Sigmoid colon (tissue), 7 donors: ENCODE measurements at regions of chr20 and their contacts with region 1.

Region 1: DNA sequence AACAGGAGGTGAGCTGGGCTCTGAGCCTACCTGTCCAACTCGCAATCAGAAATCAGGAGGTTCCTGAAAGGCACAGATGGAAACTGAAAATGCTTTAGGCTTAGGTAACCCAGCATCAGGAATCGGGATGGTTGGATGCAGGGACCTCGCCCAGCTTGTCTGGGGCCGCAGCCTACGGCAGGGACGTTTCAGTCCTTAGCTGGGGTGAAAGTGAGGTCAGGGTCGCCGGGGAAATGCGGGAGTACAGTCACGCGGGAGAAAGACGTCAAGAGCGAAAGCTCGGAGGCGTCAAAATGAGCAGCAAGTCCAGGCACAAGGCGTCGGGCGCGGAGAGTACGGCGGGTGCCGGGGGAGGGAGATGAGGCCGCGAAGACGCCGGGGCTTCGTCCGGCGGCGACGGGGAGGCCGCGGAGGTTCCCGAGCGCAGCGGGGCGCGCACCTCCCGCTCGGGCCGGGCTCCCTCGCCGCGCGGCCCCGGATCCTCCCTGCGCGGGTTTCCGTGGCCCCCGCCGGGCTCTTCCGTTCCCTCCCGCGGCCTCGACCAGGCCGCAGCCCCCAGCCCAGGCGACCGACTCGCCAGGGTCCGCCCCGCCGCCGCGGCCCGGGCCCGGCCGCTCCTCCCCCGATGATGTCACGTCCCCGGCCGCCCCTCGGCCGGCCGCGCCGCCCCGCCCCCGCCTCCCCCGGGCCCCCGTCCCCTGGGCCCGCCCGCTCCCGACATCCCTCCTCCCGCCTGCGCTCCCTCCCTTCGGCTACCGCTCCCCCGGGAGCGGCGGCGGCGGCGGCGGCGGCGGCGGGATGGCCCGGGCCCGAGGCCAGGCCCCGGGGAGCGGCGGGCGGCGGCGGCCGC is at the start of gene EBF4:
- DNase-seq: peak; percentile 86
- H3K4me3 ChIP-seq: peak within 1 kb of the TSS; percentile 39 to 72 (median 70)
- H3K27ac ChIP-seq: peak within 1 kb of the TSS; percentile 81 to 96 (median 92)
- H3K4me1 ChIP-seq: peaks cover 0 to 23% (median 20%) of the 10 kb centered on the region in 4 donors
- H3K27me3 ChIP-seq: no peaks in the 10 kb centered on the region
- CTCF ChIP-seq: no peak
- EP300 ChIP-seq: peak in 1 of 4 donors; percentile 55
- POLR2A ChIP-seq: no peak
- total RNA-seq, gene EBF4: 14.8 to 37.5 (median 30.8) TPM

Region 2: DNA sequence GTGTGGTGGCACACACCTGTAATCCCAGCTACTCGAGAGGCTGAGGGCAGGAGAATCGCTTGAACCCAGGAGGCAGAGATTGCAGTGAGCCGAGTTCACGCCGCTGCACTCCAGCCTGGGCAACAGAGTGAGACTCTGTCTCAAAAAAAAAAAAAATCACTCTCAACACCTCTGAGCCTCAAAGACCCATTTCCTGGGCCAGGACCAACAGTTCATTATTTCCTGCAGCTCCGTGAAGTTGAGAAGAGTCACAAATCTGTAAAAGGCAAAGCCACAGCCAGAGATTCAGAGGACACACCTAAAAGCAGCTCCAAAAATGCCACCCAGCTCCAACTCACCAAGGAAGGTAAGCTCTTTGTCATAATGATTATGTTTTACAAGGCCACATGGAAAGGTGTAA is 55.0 kb before region 1 on chr20:
- intact Hi-C with region 1: no loop called
- DNase-seq: no peak
- H3K4me3 ChIP-seq: no peak overlapping the region
- H3K27ac ChIP-seq: no peak overlapping the region
- H3K4me1 ChIP-seq: no peaks in the 10 kb centered on the region
- H3K27me3 ChIP-seq: no peaks in the 10 kb centered on the region
- CTCF ChIP-seq: no peak
- EP300 ChIP-seq: no peak
- POLR2A ChIP-seq: no peak

Region 3: GRCh38 chr20:2663887-2664719 is 28.2 kb before region 1 on chr20 and contains the start of gene IDH3B:
- intact Hi-C with region 1: loop called (anchors 1 kb)
- DNase-seq: peak; percentile 97
- H3K4me3 ChIP-seq: peak within 1 kb of the TSS; percentile 75 to 96 (median 88)
- H3K27ac ChIP-seq: peak within 1 kb of the TSS; percentile 78 to 94 (median 92)
- H3K4me1 ChIP-seq: peaks cover 0 to 18% (median 17%) of the 10 kb centered on the region in 4 donors
- H3K27me3 ChIP-seq: no peaks in the 10 kb centered on the region
- CTCF ChIP-seq: no peak
- EP300 ChIP-seq: no peak
- POLR2A ChIP-seq: peak; percentile 81 to 84
- total RNA-seq, gene IDH3B: 105 to 131 (median 122) TPM

Region 4: DNA sequence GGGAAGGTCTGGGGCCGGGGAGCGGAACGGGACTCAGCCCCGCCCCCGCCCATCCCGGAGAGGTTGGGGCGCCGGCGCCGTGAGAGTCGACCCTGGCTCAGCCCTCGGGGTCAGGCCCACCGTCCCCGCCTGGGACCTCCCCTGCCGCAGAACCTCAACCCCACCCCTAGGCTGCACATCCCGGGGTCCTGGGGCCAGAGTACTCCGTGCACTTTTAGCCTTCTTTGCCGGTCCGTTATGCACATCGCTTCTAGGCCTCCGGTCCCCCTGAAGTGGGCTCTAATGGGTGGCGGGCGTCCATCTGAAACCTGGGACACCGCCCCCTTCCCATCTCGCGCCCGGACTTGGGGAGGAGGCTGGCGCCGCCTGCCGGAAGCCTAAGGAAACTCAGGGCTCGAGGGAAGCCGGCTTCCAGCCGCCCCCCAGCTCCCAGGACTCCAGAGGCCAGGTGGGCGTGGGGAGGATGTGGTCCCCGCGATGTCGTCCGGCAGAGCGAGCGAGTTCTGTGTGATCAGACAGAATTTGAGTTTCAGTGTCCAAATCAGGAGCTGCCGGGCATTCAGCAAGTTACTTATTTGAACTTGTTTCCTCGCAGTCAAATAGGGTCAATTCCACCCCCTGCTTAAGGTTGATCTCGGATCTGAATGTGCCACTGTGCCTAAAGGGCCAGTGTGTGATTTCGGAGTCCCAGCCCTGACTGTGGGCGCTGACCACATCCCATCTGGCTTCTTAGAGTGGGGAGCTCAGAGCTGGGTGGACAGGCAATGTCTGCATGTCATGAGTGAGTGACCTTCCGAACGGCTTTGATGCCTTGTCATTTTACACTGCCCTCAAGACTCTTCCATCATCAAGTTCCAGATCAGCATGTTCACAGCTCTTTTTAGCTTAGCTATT is 60.6 kb after region 1 on chr20:
- intact Hi-C with region 1: loop called (anchors 5 kb)
- DNase-seq: peak; percentile 68
- H3K4me3 ChIP-seq: peak overlapping the region; percentile 23 to 47 (median 42)
- H3K27ac ChIP-seq: no peak overlapping the region
- H3K4me1 ChIP-seq: peaks cover 0 to 37% (median 31%) of the 10 kb centered on the region in 4 donors
- H3K27me3 ChIP-seq: peaks cover 3 to 57% (median 40%) of the 10 kb centered on the region in 3 donors
- CTCF ChIP-seq: peak in 3 of 4 experiments; percentile 30 to 46 (median 38)
- EP300 ChIP-seq: no peak
- POLR2A ChIP-seq: no peak

Region 5: DNA sequence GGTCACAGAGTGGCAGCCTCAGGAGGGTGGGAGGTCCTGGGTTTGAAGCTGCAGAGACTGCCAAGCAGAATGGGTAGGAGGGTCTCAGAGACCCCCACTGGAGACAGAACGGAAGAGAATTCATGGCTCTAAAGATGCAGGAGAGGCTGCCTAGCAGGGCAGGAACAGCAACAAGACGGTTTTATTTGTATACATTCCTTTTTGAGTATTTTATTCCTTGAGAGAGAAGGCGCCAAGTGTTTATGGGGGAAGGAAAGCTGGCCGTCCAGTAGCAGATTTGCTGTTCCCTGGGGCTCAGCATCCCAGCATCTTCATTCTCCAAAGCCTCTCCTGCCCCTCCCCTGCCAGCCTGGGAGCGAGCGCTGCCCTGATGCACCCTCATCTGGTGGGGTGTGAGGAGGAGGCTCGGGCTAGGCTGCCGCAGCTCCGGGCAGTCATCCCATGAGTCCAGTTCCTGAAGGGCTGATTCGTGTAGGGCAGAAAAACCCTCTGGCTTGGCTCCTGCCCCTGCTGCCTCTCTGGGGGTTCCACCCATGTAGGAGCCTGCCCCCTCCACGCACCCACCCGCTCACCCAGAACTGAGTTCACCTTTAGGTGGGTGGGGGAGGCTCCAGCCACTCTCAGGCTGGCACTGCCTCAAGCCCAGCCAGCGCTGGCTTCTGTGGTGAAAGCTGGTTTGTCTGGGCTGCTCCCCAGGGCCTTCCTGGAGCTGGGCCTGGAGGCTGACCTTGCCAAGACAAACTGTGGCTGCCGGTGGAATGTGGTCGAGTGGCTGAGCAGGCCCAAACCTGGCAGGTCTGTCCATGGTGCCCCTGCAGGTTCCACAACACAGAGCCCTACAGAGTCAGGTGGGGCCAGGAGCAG is 75.7 kb after region 1 on chr20:
- intact Hi-C with region 1: no loop called
- DNase-seq: no peak
- H3K4me3 ChIP-seq: no peak overlapping the region
- H3K27ac ChIP-seq: no peak overlapping the region
- H3K4me1 ChIP-seq: peaks cover 0 to 13% (median 10%) of the 10 kb centered on the region in 4 donors
- H3K27me3 ChIP-seq: peaks cover 0 to 62% (median 22%) of the 10 kb centered on the region in 3 donors
- CTCF ChIP-seq: no peak
- EP300 ChIP-seq: no peak
- POLR2A ChIP-seq: no peak

Region 6: GRCh38 chr20:2840138-2840966 is 148.1 kb after region 1 on chr20 and contains the starts of genes PCED1A and VPS16:
- intact Hi-C with region 1: loop called (anchors 10 kb)
- DNase-seq: peak; percentile 93
- H3K4me3 ChIP-seq: peak within 1 kb of the TSS; percentile 79 to 96 (median 85)
- H3K27ac ChIP-seq: peak within 1 kb of the TSS; percentile 86 to 95 (median 92)
- H3K4me1 ChIP-seq: peaks cover 0 to 24% (median 14%) of the 10 kb centered on the region in 4 donors
- H3K27me3 ChIP-seq: no peaks in the 10 kb centered on the region
- CTCF ChIP-seq: no peak
- EP300 ChIP-seq: no peak
- POLR2A ChIP-seq: peak; percentile 25 to 34
- total RNA-seq, gene PCED1A: 12.7 to 27.7 (median 21.5) TPM
- total RNA-seq, gene VPS16: 19.4 to 24.4 (median 21.0) TPM

Region 7: DNA sequence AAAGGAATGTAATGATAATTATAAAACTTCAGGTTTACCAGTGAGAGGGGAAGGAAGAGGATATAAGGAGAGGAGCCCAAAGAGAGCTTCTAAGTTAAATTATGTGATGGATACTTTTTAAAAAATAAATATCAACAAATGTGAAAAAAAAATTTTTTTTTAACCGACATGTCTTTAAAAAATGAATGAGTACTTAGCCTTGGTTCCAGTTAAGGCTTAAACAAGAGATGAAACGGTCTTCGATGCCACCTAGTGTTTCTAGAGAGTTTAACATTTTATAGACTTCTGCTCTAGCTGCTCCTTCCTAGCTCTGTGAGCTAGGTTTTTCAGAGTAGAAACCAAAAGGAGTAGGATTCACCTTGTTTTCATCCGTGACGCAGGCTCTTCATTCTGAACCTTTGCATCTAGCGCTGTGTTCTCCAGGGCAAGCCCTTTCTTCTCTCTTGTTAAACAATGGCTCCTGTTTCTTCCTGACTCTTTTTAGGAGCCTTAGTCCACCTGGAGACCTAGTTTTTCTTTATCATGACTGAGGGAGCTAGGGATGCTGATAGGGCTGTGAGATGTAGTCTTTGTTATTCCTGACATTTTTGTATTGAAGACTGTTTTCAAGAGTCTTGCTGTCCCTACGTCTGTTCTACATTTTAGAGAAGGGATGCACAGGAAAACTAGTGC is 308.7 kb after region 1 on chr20:
- intact Hi-C with region 1: loop called (anchors 10 kb)
- DNase-seq: no peak
- H3K4me3 ChIP-seq: no peak overlapping the region
- H3K27ac ChIP-seq: no peak overlapping the region
- H3K4me1 ChIP-seq: no peaks in the 10 kb centered on the region
- H3K27me3 ChIP-seq: no peaks in the 10 kb centered on the region
- CTCF ChIP-seq: peak in 3 of 4 experiments; percentile 13 to 38 (median 31)
- EP300 ChIP-seq: no peak
- POLR2A ChIP-seq: no peak